ENCODE measurements at regions of chr1 and their contacts with region 1.

Region 1: GRCh38 chr1:117284399-117285215 is 73.9 kb upstream of the VTCN1 start:
- DNase-seq: peak; percentile 57
- ATAC-seq: peak; percentile 94
- H3K4me3 ChIP-seq: no peak overlapping the region
- H3K27ac ChIP-seq: no peak overlapping the region
- H3K4me1 ChIP-seq: no peaks in the 10 kb centered on the region
- H3K27me3 ChIP-seq: no peaks in the 10 kb centered on the region
- CTCF ChIP-seq: peak; percentile 55 to 75 (median 73); a peak in 5 of 6 replicates
- POLR2A ChIP-seq: no peak
- RAD21 ChIP-seq: peak; percentile 94

Region 2: GRCh38 chr1:117067533-117068370 is 216.9 kb before region 1 on chr1:
- CTCF ChIA-PET with region 1: interaction called, 101 read pairs
- POLR2A ChIA-PET with region 1: no interaction called
- RAD21 ChIA-PET with region 1: interaction called, 8 to 12 read pairs
- intact Hi-C with region 1: loop called (anchors 1 kb)
- DNase-seq: peak; percentile 18
- ATAC-seq: peak; percentile 95
- H3K4me3 ChIP-seq: no peak overlapping the region
- H3K27ac ChIP-seq: no peak overlapping the region
- H3K4me1 ChIP-seq: no peaks in the 10 kb centered on the region
- H3K27me3 ChIP-seq: no peaks in the 10 kb centered on the region
- CTCF ChIP-seq: peak; percentile 69 to 74 (median 69)
- POLR2A ChIP-seq: no peak
- RAD21 ChIP-seq: peak; percentile 89

Region 3: DNA sequence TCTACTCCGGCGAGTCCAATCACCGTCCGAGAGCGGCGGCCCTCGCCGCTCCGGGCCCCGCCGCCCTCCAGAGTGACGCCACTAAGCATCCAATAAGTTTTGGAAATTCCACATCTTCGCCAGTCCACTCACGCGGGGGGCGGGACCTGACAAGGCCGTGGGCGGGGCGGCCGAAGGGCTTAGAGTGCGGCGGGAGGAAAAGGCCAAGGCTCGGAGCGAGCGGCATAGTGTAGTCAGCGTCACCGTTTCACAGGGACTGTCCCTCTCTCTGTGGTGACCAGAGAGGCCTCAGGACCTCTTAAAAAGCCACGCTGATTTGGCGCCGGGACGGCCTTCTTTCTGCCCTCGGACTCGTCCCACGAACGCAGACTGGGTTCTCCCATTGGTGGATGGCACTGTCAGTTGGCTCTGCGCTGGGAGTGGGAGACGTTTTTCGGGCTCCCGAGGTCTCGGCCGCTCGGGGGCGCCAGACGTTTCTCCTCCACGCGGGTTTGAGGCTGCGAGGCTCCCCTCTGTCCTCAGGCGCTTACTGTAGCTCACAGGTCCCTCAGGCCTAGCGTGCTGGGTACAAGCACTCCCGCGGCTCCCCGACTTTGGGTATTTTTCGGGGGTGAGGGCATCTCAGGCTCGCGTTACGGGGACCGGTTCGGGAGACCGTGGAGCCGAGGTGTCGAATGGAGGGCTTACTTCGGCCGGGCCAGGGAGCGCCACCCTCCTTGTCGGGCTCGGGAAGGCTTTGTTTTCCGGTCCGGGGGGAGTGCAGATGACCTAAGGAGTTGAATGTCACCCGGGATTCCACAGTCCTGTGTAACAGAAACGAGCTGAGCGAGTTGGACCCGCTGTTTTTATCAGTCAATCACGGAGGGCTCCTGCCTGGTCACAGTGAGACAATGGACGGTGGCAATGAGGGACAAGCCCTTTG is 162.6 kb before region 1 on chr1:
- CTCF ChIA-PET with region 1: interaction called, 15 read pairs
- POLR2A ChIA-PET with region 1: no interaction called
- RAD21 ChIA-PET with region 1: no interaction called
- intact Hi-C with region 1: no loop called
- DNase-seq: peak; percentile 90
- ATAC-seq: peak; percentile 97
- H3K4me3 ChIP-seq: peak overlapping the region; percentile 46 to 67
- H3K27ac ChIP-seq: peak overlapping the region; percentile 58
- H3K4me1 ChIP-seq: peaks cover 0 to 14% of the 10 kb centered on the region in 2 experiments; a peak in 1 of 4 replicates
- H3K27me3 ChIP-seq: peaks cover 9% of the 10 kb centered on the region; the same call in 1 of the 2 replicates
- CTCF ChIP-seq: peak; percentile 52 to 75 (median 68); a peak in 5 of 6 replicates
- POLR2A ChIP-seq: peak; percentile 17
- RAD21 ChIP-seq: peak; percentile 61

Measured in HCT116 (cell line).